HEK293 (cell line): ENCODE measurements at regions of chr11 and their contacts with region 1.

Region 1: DNA sequence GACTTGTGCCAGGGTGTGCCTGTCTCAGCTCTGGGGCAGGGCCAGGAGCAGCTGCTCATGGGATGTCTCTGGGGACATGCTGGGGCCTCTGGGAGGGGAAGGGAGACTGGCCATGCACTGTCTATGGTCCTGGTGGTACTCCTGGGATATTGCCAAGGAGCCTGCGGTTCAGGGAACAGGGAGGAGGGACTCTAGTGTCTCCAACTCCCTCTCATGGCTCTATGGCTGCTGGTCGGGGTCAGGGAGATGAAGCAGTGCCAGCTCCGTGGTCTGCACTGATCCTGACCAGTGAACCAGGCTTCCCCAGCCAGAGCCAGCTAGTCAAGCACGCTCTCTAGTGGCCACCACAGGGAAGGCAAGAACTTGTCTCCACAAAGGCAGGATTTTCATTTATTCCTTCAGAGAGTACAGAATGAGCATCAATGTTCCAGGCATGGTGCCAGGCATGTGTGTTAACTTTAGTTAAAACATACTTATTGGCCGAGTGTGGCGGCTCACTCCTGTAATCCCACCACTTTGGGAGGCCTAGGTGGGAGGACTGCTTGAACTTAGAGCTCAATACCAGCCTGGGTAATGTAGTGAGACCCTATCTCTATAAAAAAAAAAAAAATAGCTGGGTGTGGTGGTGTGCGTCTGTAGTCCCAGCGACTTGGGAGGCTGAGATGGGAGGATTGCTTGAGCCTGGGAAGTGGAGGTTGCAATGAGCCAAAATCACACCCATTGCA is 2.5 kb upstream of the BEST1 start:
- H3K4me3 ChIP-seq: no peak overlapping the region
- H3K27ac ChIP-seq: no peak overlapping the region
- H3K4me1 ChIP-seq: peaks cover 3% of the 10 kb centered on the region; the same call in 1 of the 2 replicates
- CTCF ChIP-seq: peak; percentile 77

Region 2: GRCh38 chr11:61871158-61871597 is 76.5 kb before region 1 on chr11:
- CTCF ChIA-PET with region 1: interaction called, 48 read pairs
- POLR2A ChIA-PET with region 1: no interaction called
- H3K4me3 ChIP-seq: no peak overlapping the region
- H3K27ac ChIP-seq: no peak overlapping the region
- H3K4me1 ChIP-seq: no peaks in the 10 kb centered on the region
- CTCF ChIP-seq: peak; percentile 95

Region 3: DNA sequence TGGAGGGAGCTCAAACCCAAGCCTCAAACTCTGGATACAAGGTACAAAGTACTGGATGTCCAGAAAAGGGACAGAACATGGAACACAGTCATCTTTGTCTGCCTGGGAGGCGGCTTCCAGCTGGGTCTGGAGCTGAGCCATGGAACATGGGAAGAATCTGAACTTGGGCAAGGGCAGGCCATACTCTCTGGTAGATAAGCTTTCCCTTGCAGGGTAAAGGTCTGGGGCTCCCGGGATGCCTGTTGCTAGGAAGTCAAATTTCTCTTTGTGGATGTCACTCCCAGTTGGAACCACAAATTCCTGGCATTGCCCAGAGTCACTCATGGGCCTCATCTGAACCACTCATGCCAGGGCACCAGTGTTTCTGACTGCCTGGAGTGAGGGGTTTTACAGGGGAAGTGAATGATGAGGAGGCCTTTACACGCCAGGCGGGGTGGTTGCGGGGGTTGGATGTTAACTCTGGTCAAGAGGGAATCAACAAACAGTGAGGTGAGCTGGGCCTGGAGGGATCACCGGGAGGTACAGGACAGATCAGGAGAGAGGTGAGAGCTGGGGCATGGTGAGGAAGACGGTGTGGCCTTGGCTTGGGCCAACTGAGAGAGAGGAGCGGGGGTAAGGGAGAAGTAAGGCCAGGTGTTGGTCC is 14.0 kb after region 1 on chr11:
- CTCF ChIA-PET with region 1: interaction called, 12 read pairs
- POLR2A ChIA-PET with region 1: interaction called, 22 read pairs
- H3K4me3 ChIP-seq: no peak overlapping the region
- H3K27ac ChIP-seq: no peak overlapping the region
- H3K4me1 ChIP-seq: no peaks in the 10 kb centered on the region
- CTCF ChIP-seq: no peak

Region 4: GRCh38 chr11:62044639-62045121 is 97.0 kb after region 1 on chr11:
- CTCF ChIA-PET with region 1: interaction called, 11 read pairs
- POLR2A ChIA-PET with region 1: no interaction called
- H3K4me3 ChIP-seq: no peak overlapping the region
- H3K27ac ChIP-seq: no peak overlapping the region
- H3K4me1 ChIP-seq: no peaks in the 10 kb centered on the region
- CTCF ChIP-seq: no peak

Region 5: DNA sequence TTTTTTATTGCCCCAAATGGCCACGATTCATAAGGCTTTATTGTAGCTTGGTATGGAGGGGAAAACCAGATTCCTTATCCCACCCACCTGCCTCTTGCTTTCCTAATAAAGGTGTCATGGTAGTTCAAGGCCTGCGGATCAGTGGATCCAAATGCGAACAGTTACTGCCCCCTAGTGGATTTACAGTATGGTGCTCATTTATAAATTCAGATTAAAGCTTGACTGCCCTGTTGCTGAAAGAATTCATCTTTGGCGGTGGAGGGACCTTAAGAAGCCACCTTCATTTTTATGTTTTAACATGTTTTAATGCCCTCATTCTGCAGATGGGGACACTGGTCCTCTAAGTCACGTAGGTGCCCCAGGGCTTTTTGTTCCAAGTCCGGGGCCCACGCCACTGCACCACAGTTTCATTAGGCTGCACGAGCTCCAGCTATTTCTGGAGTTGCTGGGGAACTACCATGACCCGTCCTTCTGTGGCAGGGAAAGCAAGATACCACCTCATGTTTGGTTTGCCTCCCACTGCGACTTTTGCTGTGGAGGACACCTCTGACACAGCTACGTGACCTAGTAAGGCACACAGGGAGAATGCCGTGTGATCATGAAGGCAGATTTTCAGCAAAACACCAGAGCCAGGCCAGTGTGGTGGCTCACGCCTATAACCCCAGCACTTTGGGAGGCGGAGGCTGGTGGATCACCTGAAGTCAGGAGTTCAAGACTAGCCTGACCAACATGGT is 160.5 kb after region 1 on chr11:
- CTCF ChIA-PET with region 1: interaction called, 62 read pairs
- POLR2A ChIA-PET with region 1: no interaction called
- H3K4me3 ChIP-seq: no peak overlapping the region
- H3K27ac ChIP-seq: no peak overlapping the region
- H3K4me1 ChIP-seq: no peaks in the 10 kb centered on the region
- CTCF ChIP-seq: peak; percentile 27; the same call in 1 of the 2 replicates